PC-9 (cell line): ENCODE measurements at regions of chr3 and their contacts with region 1.

Region 1: GRCh38 chr3:48556793-48557626 is at the start of gene PFKFB4:
- DNase-seq: peak; percentile 91 to 99
- H3K4me3 ChIP-seq: peak within 1 kb of the TSS; percentile 66
- H3K27ac ChIP-seq: no peak within 1 kb of the TSS
- H3K4me1 ChIP-seq: peaks cover 21% of the 10 kb centered on the region
- H3K27me3 ChIP-seq: no peaks in the 10 kb centered on the region
- CTCF ChIP-seq: no peak; the same call in 1 of the 2 replicates
- total RNA-seq, gene PFKFB4: 11.7 and 13.3 TPM in 2 replicates

Region 2: GRCh38 chr3:48400824-48401433 is 156.1 kb before region 1 on chr3:
- CTCF ChIA-PET with region 1: no interaction called
- POLR2A ChIA-PET with region 1: no interaction called
- intact Hi-C with region 1: loop called (anchors 5 kb)
- DNase-seq: peak; percentile 60 to 61
- H3K4me3 ChIP-seq: no peak overlapping the region
- H3K27ac ChIP-seq: no peak overlapping the region
- H3K4me1 ChIP-seq: peaks cover 7% of the 10 kb centered on the region; the same call in 1 of the 2 replicates
- H3K27me3 ChIP-seq: no peaks in the 10 kb centered on the region
- CTCF ChIP-seq: peak; percentile 82

Region 3: DNA sequence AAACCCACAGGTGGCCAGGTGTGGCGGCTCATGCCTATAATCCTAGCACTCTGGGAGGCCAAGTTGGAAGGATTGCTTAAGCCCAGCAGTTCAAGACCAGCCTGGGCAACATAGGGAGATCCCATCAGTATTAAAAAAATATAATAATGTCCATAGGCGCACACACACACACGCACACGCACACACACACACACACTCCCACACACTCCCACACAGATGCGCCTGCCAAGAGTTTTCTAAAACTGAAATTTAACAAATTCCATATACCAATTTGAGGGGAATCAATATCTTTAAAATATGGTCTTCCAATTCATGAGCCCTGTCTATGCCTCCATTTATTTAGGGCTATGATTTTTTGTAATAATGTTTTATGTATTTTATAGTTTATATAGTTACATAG is 70.1 kb before region 1 on chr3:
- CTCF ChIA-PET with region 1: no interaction called
- POLR2A ChIA-PET with region 1: no interaction called
- intact Hi-C with region 1: no loop called
- DNase-seq: no peak
- H3K4me3 ChIP-seq: no peak overlapping the region
- H3K27ac ChIP-seq: no peak overlapping the region
- H3K4me1 ChIP-seq: no peaks in the 10 kb centered on the region
- H3K27me3 ChIP-seq: no peaks in the 10 kb centered on the region
- CTCF ChIP-seq: no peak

Region 4: DNA sequence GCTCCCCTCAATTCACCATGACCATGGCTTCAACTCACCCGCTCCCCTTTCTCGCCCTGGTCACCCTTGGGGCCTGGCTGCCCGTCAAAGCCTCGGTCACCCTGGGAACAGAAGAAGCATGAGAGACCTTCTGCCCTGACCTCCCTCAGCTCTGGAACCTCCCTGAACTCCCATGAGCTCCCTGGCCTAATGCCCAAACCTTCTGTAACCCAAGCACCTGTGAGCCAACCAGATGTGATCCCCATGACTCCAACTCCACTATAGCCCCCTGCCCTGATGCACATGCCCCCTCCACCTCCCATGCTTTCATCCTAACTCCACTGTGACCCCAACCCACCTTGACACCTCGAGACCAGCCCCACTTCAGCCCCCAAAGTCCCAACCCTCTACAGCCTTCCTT is 10.1 kb after region 1 on chr3:
- CTCF ChIA-PET with region 1: interaction called, 32 read pairs
- POLR2A ChIA-PET with region 1: no interaction called
- intact Hi-C with region 1: no loop called
- DNase-seq: no peak
- H3K4me3 ChIP-seq: no peak overlapping the region
- H3K27ac ChIP-seq: no peak overlapping the region
- H3K4me1 ChIP-seq: 0 out of 2 replicates have a peak, but pooled peaks cover 6% of the 10 kb centered on the region
- H3K27me3 ChIP-seq: no peaks in the 10 kb centered on the region
- CTCF ChIP-seq: no peak

Region 5: DNA sequence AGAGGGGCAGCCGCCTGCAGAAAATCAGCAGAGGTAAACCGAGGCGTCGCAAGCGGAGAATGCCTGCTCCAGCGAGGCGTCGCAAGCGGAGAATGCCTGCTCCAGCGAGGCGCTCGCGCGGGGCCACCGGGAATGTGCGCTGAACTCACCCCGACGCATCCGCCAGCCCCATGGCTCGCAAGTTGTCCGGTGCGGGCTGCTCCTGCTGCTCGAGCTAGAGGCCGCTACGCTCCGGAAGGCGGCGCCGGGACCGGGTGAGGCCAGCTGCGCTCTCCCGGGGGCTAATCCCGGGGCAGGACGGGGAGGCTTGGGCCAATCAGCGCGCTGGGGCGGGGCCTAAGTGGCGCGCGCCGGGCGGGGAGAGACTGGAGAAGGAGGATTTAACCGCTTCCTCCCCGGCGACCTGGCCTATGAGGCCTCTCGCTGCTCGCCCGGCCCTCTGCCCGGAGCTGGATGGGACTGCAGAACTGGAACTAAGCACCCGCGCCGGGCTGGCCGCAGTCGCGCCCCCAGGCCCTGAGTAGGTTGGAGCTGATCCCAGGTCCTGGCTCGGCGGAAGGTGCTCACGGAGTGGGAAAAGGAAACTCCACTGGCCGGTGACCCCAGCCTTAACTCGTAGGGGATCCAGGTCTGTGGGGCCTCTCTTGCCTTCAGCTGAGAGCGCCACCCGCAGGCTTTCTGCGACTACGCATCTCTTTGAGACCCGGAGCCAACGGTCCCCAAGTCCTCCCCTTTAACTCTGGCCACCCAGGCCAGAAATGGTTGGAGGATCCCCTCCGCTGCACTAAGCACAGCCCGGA is 78.4 kb after region 1 on chr3 and contains the start of gene SLC26A6:
- CTCF ChIA-PET with region 1: no interaction called
- POLR2A ChIA-PET with region 1: interaction called, 3 read pairs
- intact Hi-C with region 1: loop called (anchors 2 kb)
- DNase-seq: peak; percentile 83 to 97
- H3K4me3 ChIP-seq: peak within 1 kb of the TSS; percentile 89
- H3K27ac ChIP-seq: no peak within 1 kb of the TSS
- H3K4me1 ChIP-seq: no peaks in the 10 kb centered on the region
- H3K27me3 ChIP-seq: no peaks in the 10 kb centered on the region
- CTCF ChIP-seq: peak; percentile 56; the same call in 1 of the 2 replicates
- total RNA-seq, gene SLC26A6: 16.5 and 18.7 TPM in 2 replicates

Region 6: DNA sequence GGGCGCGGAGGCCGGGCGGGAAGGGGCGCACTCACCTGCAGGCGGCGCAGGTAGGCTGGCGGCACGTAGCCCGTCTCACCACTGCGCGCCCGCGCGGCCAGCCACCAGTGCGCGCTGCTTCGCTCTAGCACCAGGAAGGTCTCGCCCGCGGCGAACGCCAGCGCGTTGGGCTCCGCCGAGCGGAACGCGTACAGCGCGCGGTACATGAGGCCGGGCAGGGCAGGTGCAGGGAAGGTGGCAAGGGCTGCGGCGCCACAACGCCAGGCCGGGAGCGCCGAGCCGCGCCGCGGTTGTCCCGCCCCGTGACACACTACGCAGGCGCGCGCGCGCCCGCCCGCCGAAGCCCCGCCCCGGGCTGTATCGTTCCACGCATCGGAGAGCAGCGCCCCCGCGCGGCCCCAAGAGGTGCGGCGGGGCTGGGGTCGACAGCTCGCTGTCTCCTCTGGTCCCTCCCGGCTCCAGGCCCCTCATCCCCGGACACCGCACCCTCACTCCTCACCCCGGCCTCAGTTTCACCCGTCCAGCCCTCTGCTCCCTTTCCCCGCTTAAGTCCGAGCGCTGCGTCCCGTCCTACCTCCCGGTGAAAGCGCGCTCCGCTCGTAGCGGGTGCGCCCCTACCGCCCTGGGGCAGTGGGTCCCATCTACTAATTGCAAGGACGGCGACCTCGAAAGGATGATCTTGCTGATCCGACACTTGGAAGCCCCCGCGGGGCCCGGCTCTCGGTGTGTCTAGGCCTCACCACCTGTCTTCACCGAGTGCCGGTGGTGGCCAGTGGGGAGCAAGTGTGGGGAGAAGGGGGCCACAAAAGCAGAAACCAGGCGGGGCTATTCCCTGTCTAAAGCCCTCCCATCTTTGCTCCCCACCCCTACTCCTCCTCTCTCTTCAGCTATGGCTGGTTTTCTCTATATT is 128.8 kb after region 1 on chr3 and contains the start of gene NCKIPSD:
- CTCF ChIA-PET with region 1: interaction called, 6 read pairs
- POLR2A ChIA-PET with region 1: no interaction called
- intact Hi-C with region 1: loop called (anchors 1 kb)
- DNase-seq: peak; percentile 52 to 86
- H3K4me3 ChIP-seq: peak within 1 kb of the TSS; percentile 72
- H3K27ac ChIP-seq: peak within 1 kb of the TSS; percentile 46; the same call in 1 of the 2 replicates
- H3K4me1 ChIP-seq: peaks cover 9% of the 10 kb centered on the region
- H3K27me3 ChIP-seq: no peaks in the 10 kb centered on the region
- CTCF ChIP-seq: peak; percentile 72
- total RNA-seq, gene NCKIPSD: 40.0 and 53.3 TPM in 2 replicates

Region 7: DNA sequence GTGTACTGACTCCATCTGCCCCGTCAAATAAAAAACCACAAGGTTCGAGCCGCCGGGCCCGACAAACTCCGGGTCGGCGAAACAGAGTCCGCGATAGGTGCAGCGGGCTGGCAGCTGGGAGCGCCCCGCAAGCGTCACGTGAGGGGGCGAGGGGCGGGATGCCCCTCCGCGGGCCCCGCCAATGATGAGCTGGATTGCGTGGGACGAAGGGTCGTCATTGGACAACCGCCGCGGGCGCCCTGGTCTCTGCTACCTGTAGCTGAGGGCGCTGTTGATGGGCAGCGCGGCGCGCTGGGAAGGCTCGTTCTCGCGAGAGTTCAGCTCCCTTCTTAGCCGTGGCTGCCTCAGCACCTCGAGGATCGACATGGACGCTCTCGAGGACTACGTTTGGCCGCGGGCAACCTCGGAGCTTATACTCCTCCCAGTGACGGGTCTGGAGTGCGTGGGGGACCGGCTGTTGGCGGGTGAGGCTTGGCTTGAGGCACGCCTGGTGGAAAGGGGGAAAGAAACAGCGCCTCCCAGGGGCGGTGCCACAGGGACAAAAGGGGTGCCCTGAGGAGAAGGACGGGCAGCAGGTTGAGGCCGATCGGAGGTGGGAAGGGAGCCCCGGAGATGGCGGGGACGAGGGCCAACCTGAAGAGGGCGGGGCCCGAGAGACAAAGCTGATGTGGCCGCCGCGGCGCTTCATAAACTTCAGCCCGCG is 450.2 kb after region 1 on chr3 and contains the start of gene WDR6:
- CTCF ChIA-PET with region 1: no interaction called
- POLR2A ChIA-PET with region 1: interaction called, 11 read pairs
- intact Hi-C with region 1: no loop called
- DNase-seq: peak; percentile 90 to 97
- H3K4me3 ChIP-seq: peak within 1 kb of the TSS; percentile 81
- H3K27ac ChIP-seq: peak within 1 kb of the TSS; percentile 87
- H3K4me1 ChIP-seq: peaks cover 9% of the 10 kb centered on the region; the same call in 1 of the 2 replicates
- H3K27me3 ChIP-seq: no peaks in the 10 kb centered on the region
- CTCF ChIP-seq: peak; percentile 60
- total RNA-seq, gene WDR6: 157 and 159 TPM in 2 replicates